Dorsolateral prefrontal cortex (tissue), 120 donors: ENCODE measurements at regions of chr7 and their contacts with region 1.

Region 1: GRCh38 chr7:129644634-129645230 is 33.2 kb downstream of the NRF1 start:
- DNase-seq: no peak
- H3K4me3 ChIP-seq: no peak overlapping the region
- H3K27ac ChIP-seq: no peak overlapping the region
- H3K27me3 ChIP-seq: no peaks in the 10 kb centered on the region
- CTCF ChIP-seq: peak; percentile 36 to 81 (median 64)

Region 2: DNA sequence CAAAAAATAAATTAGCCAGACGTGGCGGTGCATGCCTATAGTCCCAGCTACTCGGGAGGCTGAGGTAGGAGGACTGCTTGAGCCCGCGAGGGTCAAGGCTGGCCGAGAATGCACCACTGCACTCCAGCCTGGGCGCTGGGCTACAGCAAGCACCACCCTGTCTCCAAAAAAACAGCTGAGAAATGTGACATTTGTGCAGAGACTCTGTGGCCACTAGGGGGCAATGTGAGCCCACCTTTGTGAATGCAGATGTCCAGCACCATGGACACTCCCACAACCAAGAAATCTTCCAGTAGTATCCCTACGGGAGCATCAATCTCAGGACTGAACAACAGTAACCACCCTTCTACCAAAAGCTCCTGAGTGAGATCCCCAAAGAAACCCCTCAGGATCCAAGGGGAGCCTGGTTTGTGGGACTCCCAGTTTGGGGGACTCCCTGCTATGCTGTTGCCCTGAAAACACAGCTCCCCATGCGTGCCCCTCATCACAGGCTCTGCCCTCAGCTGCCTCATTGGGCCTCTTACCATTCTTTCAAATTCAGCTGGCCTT is 426.1 kb before region 1 on chr7:
- intact Hi-C with region 1: loop called (anchors 10 kb)
- DNase-seq: peak; percentile 74 to 92 (median 84)
- H3K4me3 ChIP-seq: peak overlapping the region in 22 of 59 donors; percentile 0 to 55 (median 20)
- H3K27ac ChIP-seq: no peak overlapping the region
- H3K27me3 ChIP-seq: no peaks in the 10 kb centered on the region
- CTCF ChIP-seq: peak; percentile 83 to 98 (median 95)

Region 3: GRCh38 chr7:129502376-129502776 is 142.4 kb before region 1 on chr7 and contains the start of gene SMKR1:
- intact Hi-C with region 1: loop called in 1 of 2 experiments (anchors 10 kb)
- DNase-seq: peak; percentile 38 to 86 (median 72)
- H3K4me3 ChIP-seq: peak within 1 kb of the TSS; percentile 54 to 83 (median 71)
- H3K27ac ChIP-seq: peak within 1 kb of the TSS in 31 of 59 donors; percentile 6 to 73 (median 46)
- H3K27me3 ChIP-seq: no peaks in the 10 kb centered on the region
- CTCF ChIP-seq: no peak
- total RNA-seq, gene SMKR1: 2.1 to 17.4 (median 8.5) TPM

Region 4: GRCh38 chr7:129611246-129612111 is 33.3 kb before region 1 on chr7 and contains the start of gene NRF1:
- intact Hi-C with region 1: loop called in 1 of 2 experiments (anchors 2 kb)
- DNase-seq: peak; percentile 66 to 91 (median 80)
- H3K4me3 ChIP-seq: peak within 1 kb of the TSS; percentile 60 to 97 (median 89)
- H3K27ac ChIP-seq: peak within 1 kb of the TSS; percentile 89 to 100 (median 98)
- H3K27me3 ChIP-seq: no peaks in the 10 kb centered on the region
- CTCF ChIP-seq: peak in 33 of 56 donors; percentile 10 to 55 (median 26)
- total RNA-seq, gene NRF1: 20.9 to 56.9 (median 34.7) TPM